Mammary epithelial cell (primary cell): ENCODE measurements at regions of chr6 and their contacts with region 1.

Region 1: GRCh38 chr6:43723737-43724295 is 36.2 kb upstream of the MRPS18A start:
- DNase-seq: peak; percentile 76
- H3K4me3 ChIP-seq: no peak overlapping the region
- H3K27ac ChIP-seq: no peak overlapping the region
- H3K4me1 ChIP-seq: peaks cover 31% of the 10 kb centered on the region
- H3K27me3 ChIP-seq: no peaks in the 10 kb centered on the region
- CTCF ChIP-seq: peak; percentile 75 to 84

Region 2: GRCh38 chr6:43667245-43668150 is 56.3 kb before region 1 on chr6:
- CTCF ChIA-PET with region 1: no interaction called
- dilution Hi-C with region 1: no loop called
- in situ Hi-C with region 1: no loop called
- intact Hi-C with region 1: loop called (anchors 2 kb)
- DNase-seq: peak; percentile 69
- H3K4me3 ChIP-seq: no peak overlapping the region
- H3K27ac ChIP-seq: peak overlapping the region; percentile 2
- H3K4me1 ChIP-seq: peaks cover 47% of the 10 kb centered on the region
- H3K27me3 ChIP-seq: no peaks in the 10 kb centered on the region
- CTCF ChIP-seq: peak; percentile 96 to 98

Region 3: DNA sequence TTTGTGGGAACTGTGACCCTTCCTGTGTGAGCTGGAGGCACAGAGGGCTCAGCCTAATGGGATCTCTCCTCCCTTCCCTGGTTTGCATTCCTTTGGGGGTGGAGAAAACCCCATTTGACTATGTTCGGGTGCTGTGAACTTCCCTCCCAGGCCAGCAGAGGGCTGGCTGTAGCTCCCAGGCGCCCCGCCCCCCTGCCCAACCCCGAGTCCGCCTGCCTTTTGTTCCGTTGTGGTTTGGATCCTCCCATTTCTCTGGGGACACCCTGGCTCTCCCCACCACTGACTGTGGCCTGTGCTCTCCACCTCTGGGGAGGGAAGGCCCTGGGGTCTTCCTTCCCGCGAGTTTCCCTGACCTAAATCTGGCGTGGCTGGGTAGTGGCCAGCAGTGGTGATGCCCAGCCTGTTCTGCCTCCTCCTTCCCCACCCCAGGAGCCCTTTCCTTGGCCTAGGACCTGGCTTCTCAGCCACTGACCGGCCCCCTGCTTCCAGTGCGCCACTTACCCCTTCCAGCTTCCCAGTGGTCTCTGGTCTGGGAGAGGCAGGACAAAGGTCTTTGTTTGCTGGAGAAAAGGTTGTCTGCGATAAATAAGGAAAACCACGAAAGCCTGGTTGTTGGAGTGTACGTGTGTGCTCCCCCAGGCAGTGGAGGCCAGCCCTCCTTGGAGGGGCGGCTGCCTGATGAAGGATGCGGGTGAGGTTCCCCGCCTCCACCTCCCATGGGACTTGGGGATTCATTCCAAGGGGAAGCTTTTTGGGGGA is 51.1 kb after region 1 on chr6:
- CTCF ChIA-PET with region 1: interaction called, 5 read pairs
- dilution Hi-C with region 1: no loop called
- in situ Hi-C with region 1: loop called in 1 of 2 experiments (anchors 5 kb)
- intact Hi-C with region 1: loop called (anchors 1 kb)
- DNase-seq: peak; percentile 69
- H3K4me3 ChIP-seq: peak overlapping the region; percentile 97 to 98 (median 98)
- H3K27ac ChIP-seq: peak overlapping the region; percentile 14
- H3K4me1 ChIP-seq: peaks cover 22% of the 10 kb centered on the region
- H3K27me3 ChIP-seq: no peaks in the 10 kb centered on the region
- CTCF ChIP-seq: peak; percentile 83 to 94

Region 4: GRCh38 chr6:43838276-43839036 is 114.6 kb after region 1 on chr6:
- CTCF ChIA-PET with region 1: no interaction called
- dilution Hi-C with region 1: no loop called
- in situ Hi-C with region 1: no loop called
- intact Hi-C with region 1: loop called (anchors 5 kb)
- DNase-seq: peak; percentile 20
- H3K4me3 ChIP-seq: no peak overlapping the region
- H3K27ac ChIP-seq: no peak overlapping the region
- H3K4me1 ChIP-seq: peaks cover 9% of the 10 kb centered on the region
- H3K27me3 ChIP-seq: no peaks in the 10 kb centered on the region
- CTCF ChIP-seq: peak; percentile 33 to 59

Region 5: DNA sequence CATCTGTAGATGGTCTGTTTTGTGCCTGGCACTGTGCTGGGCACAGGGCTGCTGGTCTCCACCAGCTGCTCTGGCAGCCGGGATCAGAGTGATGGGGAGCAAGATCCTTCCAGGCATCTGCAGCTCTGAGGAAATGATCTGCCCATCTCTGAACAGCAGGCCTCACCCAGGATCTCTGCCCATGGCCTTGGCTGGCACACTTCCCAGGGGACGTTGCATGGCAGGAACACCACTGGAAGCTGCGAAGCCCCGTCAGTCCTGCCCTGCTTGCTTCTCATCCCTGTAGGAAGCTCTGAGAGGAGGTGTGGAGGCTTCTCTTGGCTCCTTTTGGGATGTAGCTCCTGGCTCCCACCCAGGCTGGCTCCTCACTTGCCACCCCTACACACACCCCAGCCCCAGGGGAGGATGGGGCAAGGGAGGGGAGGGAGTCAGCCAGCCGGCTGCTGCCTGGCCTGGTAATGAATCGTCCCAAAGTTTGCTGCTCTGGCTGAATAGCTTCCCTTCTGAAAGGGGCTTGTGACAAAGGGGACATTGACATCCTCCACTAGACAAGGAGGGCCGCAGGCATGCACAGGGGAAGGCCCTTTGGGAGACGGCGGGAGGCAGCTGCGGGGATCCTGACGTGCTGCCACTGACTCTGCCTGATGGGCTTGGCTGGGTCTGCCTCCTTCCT is 155.1 kb after region 1 on chr6:
- CTCF ChIA-PET with region 1: no interaction called
- dilution Hi-C with region 1: no loop called
- in situ Hi-C with region 1: no loop called
- intact Hi-C with region 1: no loop called
- DNase-seq: no peak
- H3K4me3 ChIP-seq: no peak overlapping the region
- H3K27ac ChIP-seq: no peak overlapping the region
- H3K4me1 ChIP-seq: no peaks in the 10 kb centered on the region
- H3K27me3 ChIP-seq: no peaks in the 10 kb centered on the region
- CTCF ChIP-seq: no peak

Region 6: DNA sequence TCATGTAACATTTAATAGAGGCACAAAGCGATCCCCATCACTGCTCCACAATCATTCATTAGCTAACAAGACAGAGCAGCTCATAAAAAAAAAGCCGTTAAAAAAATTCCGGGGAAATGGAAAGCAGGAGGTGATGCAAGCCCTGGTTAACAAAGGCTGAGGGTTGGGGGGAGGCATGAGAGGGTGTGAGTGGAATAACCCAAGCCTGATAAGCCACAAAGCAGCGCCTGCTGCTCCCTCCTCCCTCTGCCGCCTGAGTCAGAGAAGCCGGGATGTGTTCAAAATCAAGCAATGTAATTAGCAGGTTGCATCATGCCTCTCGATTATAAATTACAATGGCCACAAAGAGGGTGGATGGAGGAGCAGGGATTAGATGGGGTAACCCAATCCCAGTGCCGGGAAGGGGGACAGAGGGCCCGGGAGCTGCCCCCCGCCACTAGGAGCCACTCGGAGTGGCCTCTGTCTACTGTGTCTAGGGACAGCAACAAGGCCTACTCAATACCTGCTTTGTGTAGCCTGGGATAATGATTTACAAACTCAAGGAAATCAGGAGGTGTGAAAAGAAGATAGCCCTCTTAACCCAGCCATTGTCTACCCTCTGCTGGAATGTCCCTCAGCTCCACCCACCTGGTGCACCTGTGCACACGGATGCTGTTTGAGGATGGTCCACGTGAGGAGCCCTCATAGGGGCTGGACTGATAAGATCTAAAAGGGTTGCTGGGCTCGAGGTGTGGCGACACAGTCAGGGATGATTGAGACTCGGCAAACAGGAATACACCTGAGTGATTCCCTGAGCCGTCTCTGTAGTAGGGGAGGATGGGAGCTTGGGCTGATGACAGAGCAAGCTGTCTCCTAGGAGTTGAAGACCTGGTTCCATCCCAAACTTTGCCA is 203.1 kb after region 1 on chr6:
- CTCF ChIA-PET with region 1: no interaction called
- dilution Hi-C with region 1: no loop called
- in situ Hi-C with region 1: no loop called
- intact Hi-C with region 1: loop called (anchors 10 kb)
- DNase-seq: peak; percentile 93
- H3K4me3 ChIP-seq: no peak overlapping the region
- H3K27ac ChIP-seq: peak overlapping the region; percentile 69
- H3K4me1 ChIP-seq: peaks cover 45% of the 10 kb centered on the region
- H3K27me3 ChIP-seq: no peaks in the 10 kb centered on the region
- CTCF ChIP-seq: peak; percentile 8 to 54